ENCODE measurements at regions of chr2 and their contacts with region 1.

Region 1: DNA sequence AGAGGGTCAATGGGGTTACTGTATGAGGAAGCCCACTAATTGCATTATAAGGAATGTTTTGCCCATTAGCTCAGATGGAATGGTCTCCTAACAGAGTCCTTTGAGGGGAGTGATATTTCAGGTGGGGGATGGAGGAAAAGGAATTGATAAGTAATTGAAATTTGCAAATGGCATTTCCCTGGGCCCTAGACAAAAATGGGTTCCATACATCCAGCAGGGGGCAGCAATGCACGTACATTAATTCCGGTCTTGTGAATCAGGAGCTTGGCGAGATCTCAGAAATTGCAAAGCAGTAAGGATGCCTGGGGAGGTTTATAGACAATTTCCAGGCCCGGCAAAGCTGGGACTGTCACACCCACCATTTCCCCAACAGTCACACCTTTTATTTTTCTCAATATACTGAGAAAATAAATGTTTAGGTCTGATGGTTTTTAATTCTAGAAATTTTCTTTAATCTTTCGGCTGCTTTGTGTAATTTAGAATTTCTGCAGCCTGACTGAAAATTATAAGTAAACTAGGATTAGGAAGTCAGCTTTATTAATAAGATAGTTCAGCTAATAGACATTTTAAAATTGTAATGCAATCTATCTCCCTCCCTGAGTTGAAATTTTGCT is 122.8 kb downstream of the LYPD1 start:
- DNase-seq: peak; percentile 8
- ATAC-seq: peak; percentile 78
- H3K4me3 ChIP-seq: no peak overlapping the region
- H3K27ac ChIP-seq: no peak overlapping the region
- H3K4me1 ChIP-seq: no peaks in the 10 kb centered on the region
- H3K27me3 ChIP-seq: no peaks in the 10 kb centered on the region
- CTCF ChIP-seq: peak; percentile 51 to 69 (median 60); a peak in 5 of 6 replicates
- EP300 ChIP-seq: no peak
- POLR2A ChIP-seq: no peak
- RAD21 ChIP-seq: peak; percentile 71

Region 2: GRCh38 chr2:132267105-132267497 is 280.1 kb before region 1 on chr2:
- CTCF ChIA-PET with region 1: no interaction called
- POLR2A ChIA-PET with region 1: no interaction called
- RAD21 ChIA-PET with region 1: no interaction called
- SMC1A ChIA-PET with region 1: no interaction called
- in situ Hi-C with region 1: no loop called
- intact Hi-C with region 1: loop called (anchors 2 kb)
- DNase-seq: no peak
- ATAC-seq: peak; percentile 30
- H3K4me3 ChIP-seq: no peak overlapping the region
- H3K27ac ChIP-seq: no peak overlapping the region
- H3K4me1 ChIP-seq: no peaks in the 10 kb centered on the region
- H3K27me3 ChIP-seq: no peaks in the 10 kb centered on the region
- CTCF ChIP-seq: no peak
- EP300 ChIP-seq: no peak
- POLR2A ChIP-seq: no peak
- RAD21 ChIP-seq: no peak

Region 3: GRCh38 chr2:132519566-132519965 is 27.6 kb before region 1 on chr2:
- CTCF ChIA-PET with region 1: no interaction called
- POLR2A ChIA-PET with region 1: no interaction called
- RAD21 ChIA-PET with region 1: no interaction called
- SMC1A ChIA-PET with region 1: no interaction called
- in situ Hi-C with region 1: no loop called
- intact Hi-C with region 1: no loop called
- DNase-seq: no peak
- ATAC-seq: no peak
- H3K4me3 ChIP-seq: no peak overlapping the region
- H3K27ac ChIP-seq: no peak overlapping the region
- H3K4me1 ChIP-seq: no peaks in the 10 kb centered on the region
- H3K27me3 ChIP-seq: no peaks in the 10 kb centered on the region
- CTCF ChIP-seq: no peak
- EP300 ChIP-seq: no peak
- POLR2A ChIP-seq: no peak
- RAD21 ChIP-seq: no peak

Region 4: DNA sequence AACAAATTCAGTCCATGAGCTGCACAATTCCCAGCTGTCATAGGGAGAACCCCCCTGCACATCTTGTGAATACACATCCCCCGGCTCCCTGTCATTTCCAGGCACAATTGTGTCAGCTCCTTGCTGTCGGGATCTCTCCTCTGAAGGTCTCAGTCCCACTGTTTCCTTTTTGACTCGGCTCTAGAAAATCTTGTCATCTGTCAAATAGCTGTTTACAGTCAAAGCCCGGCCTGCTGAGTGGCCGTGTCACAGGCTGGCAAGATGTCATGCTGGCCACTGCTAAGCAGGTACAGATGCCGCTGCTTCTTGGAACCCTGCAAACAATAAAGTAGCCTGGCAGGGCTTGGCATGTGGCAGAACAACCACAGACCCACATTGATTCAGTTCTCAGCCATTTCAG is 61.1 kb after region 1 on chr2:
- CTCF ChIA-PET with region 1: no interaction called
- POLR2A ChIA-PET with region 1: no interaction called
- RAD21 ChIA-PET with region 1: no interaction called
- SMC1A ChIA-PET with region 1: no interaction called
- in situ Hi-C with region 1: no loop called
- intact Hi-C with region 1: no loop called
- DNase-seq: no peak
- ATAC-seq: no peak
- H3K4me3 ChIP-seq: no peak overlapping the region
- H3K27ac ChIP-seq: no peak overlapping the region
- H3K4me1 ChIP-seq: no peaks in the 10 kb centered on the region
- H3K27me3 ChIP-seq: no peaks in the 10 kb centered on the region
- CTCF ChIP-seq: no peak
- EP300 ChIP-seq: no peak
- POLR2A ChIP-seq: no peak
- RAD21 ChIP-seq: no peak

Region 5: GRCh38 chr2:132849118-132849517 is 301.9 kb after region 1 on chr2:
- CTCF ChIA-PET with region 1: interaction called, 8 read pairs
- POLR2A ChIA-PET with region 1: no interaction called
- RAD21 ChIA-PET with region 1: interaction called, 4 read pairs
- SMC1A ChIA-PET with region 1: interaction called, 13 read pairs
- in situ Hi-C with region 1: no loop called
- intact Hi-C with region 1: no loop called
- DNase-seq: no peak
- ATAC-seq: no peak
- H3K4me3 ChIP-seq: no peak overlapping the region
- H3K27ac ChIP-seq: no peak overlapping the region
- H3K4me1 ChIP-seq: no peaks in the 10 kb centered on the region
- H3K27me3 ChIP-seq: no peaks in the 10 kb centered on the region; a peak in 1 of 4 replicates
- CTCF ChIP-seq: no peak
- EP300 ChIP-seq: no peak
- POLR2A ChIP-seq: no peak
- RAD21 ChIP-seq: no peak

Region 6: DNA sequence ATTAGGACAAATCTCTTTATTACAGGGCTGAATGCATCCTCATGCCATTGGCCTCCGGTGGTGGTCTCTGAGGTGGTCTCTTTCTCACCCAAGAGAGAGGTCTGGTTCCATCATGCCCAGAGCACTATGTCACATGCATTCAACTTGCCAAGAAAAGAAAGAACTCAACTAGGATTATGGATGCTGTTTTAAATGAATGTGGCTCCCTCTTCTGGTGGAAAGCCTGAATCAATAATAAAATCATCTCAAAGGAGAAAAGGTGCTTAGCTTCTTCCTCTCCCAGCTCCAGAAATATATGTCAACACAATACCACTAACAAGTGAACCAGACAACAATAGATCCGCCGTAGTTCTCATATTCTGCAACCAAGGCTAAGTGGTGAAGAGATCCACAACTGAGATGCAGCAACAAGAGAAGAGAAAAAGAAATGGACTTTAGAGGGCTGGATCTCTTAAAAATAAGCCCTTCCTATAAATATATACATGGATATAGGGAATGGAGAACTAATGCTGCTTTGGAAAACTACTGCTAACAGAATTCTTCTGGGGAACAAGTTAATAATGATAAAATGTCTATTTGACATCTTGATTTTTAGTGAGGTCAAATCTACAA is 624.3 kb after region 1 on chr2:
- CTCF ChIA-PET with region 1: interaction called, 54 read pairs
- POLR2A ChIA-PET with region 1: no interaction called
- RAD21 ChIA-PET with region 1: interaction called, 48 read pairs
- SMC1A ChIA-PET with region 1: interaction called, 67 read pairs
- in situ Hi-C with region 1: loop called (anchors 5 kb)
- intact Hi-C with region 1: loop called (anchors 1 kb)
- DNase-seq: peak; percentile 3
- ATAC-seq: peak; percentile 72
- H3K4me3 ChIP-seq: no peak overlapping the region
- H3K27ac ChIP-seq: no peak overlapping the region
- H3K4me1 ChIP-seq: no peaks in the 10 kb centered on the region
- H3K27me3 ChIP-seq: no peaks in the 10 kb centered on the region; a peak in 2 of 4 replicates
- CTCF ChIP-seq: peak; percentile 36 to 72 (median 39); a peak in 5 of 6 replicates
- EP300 ChIP-seq: no peak
- POLR2A ChIP-seq: no peak
- RAD21 ChIP-seq: peak; percentile 75

Region 7: DNA sequence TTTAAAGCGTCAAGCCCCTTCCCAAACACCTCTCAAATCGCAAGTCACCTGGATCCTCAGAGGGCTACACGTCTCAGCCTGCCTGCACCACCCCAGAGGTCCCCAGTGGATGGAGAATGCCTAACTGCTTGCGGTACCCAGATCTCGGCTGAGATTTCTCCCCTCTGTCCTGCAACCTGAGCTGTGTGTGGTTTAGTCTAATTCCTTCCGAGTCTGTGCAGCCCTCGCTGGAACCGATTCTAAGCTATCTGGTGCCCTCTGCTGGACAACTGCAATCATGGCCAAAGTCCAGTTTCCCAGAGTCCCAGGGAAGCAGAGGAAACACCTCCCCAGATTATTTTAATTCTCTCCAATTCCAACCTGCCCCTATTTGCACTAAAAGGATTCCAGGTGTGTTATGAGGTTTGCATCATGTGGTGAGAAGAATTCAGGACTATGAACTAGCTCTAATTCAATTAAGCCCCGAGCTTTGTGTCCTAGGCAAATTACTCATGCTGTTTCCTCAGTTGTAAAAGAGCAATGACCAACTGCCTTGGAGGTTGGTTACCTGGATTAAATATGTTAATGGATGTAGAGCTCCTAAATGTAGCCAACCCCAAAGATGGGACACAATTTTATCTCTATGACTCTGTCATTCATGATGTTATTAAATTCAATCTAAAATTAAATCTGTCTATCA is 1297.2 kb after region 1 on chr2:
- CTCF ChIA-PET with region 1: interaction called, 16 read pairs
- POLR2A ChIA-PET with region 1: no interaction called
- RAD21 ChIA-PET with region 1: interaction called, 9 read pairs
- SMC1A ChIA-PET with region 1: interaction called, 7 read pairs
- in situ Hi-C with region 1: loop called (anchors 5 kb)
- intact Hi-C with region 1: loop called (anchors 1 kb)
- DNase-seq: peak; percentile 5
- ATAC-seq: peak; percentile 94
- H3K4me3 ChIP-seq: no peak overlapping the region
- H3K27ac ChIP-seq: no peak overlapping the region
- H3K4me1 ChIP-seq: no peaks in the 10 kb centered on the region
- H3K27me3 ChIP-seq: no peaks in the 10 kb centered on the region; a peak in 1 of 4 replicates
- CTCF ChIP-seq: peak; percentile 84 to 91 (median 84)
- EP300 ChIP-seq: no peak
- POLR2A ChIP-seq: no peak
- RAD21 ChIP-seq: peak; percentile 87

Measured in GM12878 (cell line).